IMR-90 (cell line): ENCODE measurements at regions of chr7 and their contacts with region 1.

Region 1: GRCh38 chr7:74254129-74254857 is at the start of gene RFC2:
- DNase-seq: peak; percentile 94
- ATAC-seq: peak; percentile 97
- H3K4me3 ChIP-seq: peak within 1 kb of the TSS; percentile 73
- H3K27ac ChIP-seq: peak within 1 kb of the TSS; percentile 86
- H3K4me1 ChIP-seq: peaks cover 10% of the 10 kb centered on the region
- H3K27me3 ChIP-seq: no peaks in the 10 kb centered on the region
- CTCF ChIP-seq: 0 out of 2 replicates have a peak, but pooled peaks have one; percentile 23
- POLR2A ChIP-seq: peak; percentile 87
- RAD21 ChIP-seq: no peak; the same call in 1 of the 2 replicates
- total RNA-seq, gene RFC2: 33.9 and 37.8 TPM in 2 replicates

Region 2: GRCh38 chr7:74289659-74290514 is 35.6 kb after region 1 on chr7:
- CTCF ChIA-PET with region 1: no interaction called
- POLR2A ChIA-PET with region 1: no interaction called
- dilution Hi-C with region 1: no loop called
- in situ Hi-C with region 1: no loop called
- intact Hi-C with region 1: loop called (anchors 2 kb)
- DNase-seq: no peak
- ATAC-seq: peak; percentile 36
- H3K4me3 ChIP-seq: peak overlapping the region; percentile 96
- H3K27ac ChIP-seq: peak overlapping the region; percentile 89
- H3K4me1 ChIP-seq: peaks cover 29% of the 10 kb centered on the region
- H3K27me3 ChIP-seq: no peaks in the 10 kb centered on the region
- CTCF ChIP-seq: no peak
- POLR2A ChIP-seq: no peak
- RAD21 ChIP-seq: peak; percentile 3; the same call in 1 of the 2 replicates

Region 3: GRCh38 chr7:74502181-74502891 is 248.0 kb after region 1 on chr7:
- CTCF ChIA-PET with region 1: no interaction called
- POLR2A ChIA-PET with region 1: no interaction called
- dilution Hi-C with region 1: no loop called
- in situ Hi-C with region 1: no loop called
- intact Hi-C with region 1: no loop called
- DNase-seq: no peak
- ATAC-seq: no peak
- H3K4me3 ChIP-seq: no peak overlapping the region
- H3K27ac ChIP-seq: no peak overlapping the region
- H3K4me1 ChIP-seq: peaks cover 18% of the 10 kb centered on the region
- H3K27me3 ChIP-seq: no peaks in the 10 kb centered on the region
- CTCF ChIP-seq: no peak
- POLR2A ChIP-seq: no peak
- RAD21 ChIP-seq: no peak